Breast epithelium (tissue), 4 donors: ENCODE measurements at regions of chr4 and their contacts with region 1.

Region 1: DNA sequence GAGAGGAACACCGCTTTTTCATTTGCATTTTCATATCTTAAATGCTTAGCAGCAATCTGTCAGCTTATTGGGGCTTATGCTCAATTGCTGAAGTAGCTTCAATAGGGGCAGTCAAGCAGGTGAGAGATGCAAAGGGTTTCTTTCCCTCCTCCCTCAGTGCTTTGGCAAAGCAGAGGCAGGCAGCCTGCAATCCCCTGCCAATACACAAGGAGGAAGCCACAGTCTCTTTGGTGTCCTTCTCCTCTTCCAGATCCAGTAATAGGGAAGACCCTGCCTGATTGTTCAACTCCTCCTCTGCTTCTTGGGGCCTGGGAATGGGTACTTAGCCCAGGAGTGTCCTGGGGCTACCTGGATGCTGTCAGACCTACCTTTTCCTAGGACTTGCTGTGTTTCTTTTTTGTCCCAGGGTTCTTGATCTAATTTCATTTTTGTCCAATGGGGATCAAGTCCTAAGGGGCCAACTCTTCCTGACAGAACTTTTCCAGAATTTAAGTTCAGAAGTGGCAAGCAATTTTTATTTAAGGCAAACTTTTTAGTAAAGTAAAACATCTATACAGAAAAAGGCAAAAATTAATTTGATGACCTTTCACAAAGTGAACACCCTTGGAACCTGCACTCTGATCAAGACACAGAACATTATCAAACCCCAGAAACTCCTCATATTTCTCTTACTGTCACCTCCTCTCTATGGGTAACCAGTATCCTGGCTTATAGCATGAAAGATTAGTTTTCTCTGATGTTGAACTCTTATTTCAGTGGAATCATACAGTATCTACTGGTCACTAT is 260.3 kb downstream of the PPP3CA start:
- DNase-seq: no peak
- H3K4me3 ChIP-seq: no peak overlapping the region
- H3K27ac ChIP-seq: no peak overlapping the region
- H3K4me1 ChIP-seq: no peaks in the 10 kb centered on the region
- H3K27me3 ChIP-seq: no peaks in the 10 kb centered on the region
- CTCF ChIP-seq: no peak
- POLR2A ChIP-seq: no peak

Region 2: DNA sequence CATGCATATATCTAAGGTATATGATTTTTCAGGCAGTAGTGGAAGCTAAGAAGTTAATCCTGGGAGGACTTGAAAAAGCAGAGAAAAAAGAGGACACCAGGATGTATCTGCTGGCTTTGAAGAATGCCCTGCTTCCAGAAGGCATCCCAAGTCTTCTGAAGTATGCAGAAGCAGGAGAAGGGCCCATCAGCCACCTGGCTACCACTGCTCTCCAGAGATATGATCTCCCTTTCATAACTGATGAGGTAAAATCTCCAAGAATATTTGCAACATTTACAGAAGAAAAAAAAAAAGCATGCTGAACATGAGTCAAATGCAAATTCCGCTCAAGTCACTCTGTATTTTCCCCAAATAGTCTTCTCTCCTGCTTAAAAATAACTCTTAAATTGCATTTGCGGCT is 1480.3 kb before region 1 on chr4:
- intact Hi-C with region 1: no loop called
- DNase-seq: no peak
- H3K4me3 ChIP-seq: no peak overlapping the region
- H3K27ac ChIP-seq: no peak overlapping the region
- H3K4me1 ChIP-seq: no peaks in the 10 kb centered on the region
- H3K27me3 ChIP-seq: no peaks in the 10 kb centered on the region
- CTCF ChIP-seq: no peak
- POLR2A ChIP-seq: no peak

Region 3: DNA sequence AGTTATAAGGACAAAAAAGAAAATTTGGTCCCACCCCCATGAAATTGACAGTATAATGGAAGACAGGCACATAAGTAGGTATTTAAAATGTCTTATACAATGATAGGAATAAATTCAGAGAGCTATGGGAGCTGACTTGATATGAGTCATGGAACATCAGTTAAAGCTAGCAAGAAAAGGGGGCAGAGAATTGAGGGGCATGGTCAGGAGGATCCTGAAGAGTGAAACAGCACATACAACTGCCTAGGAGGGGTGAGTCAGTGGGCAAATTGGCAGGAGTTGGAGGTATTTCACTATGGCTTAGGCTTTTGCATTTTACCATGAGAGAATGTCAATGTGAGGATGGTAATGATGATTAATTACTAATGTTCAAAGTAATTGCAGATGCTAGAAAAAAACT is 608.2 kb after region 1 on chr4:
- intact Hi-C with region 1: loop called (anchors 5 kb)
- DNase-seq: no peak
- H3K4me3 ChIP-seq: no peak overlapping the region
- H3K27ac ChIP-seq: no peak overlapping the region
- H3K4me1 ChIP-seq: no peaks in the 10 kb centered on the region
- H3K27me3 ChIP-seq: no peaks in the 10 kb centered on the region
- CTCF ChIP-seq: no peak
- POLR2A ChIP-seq: no peak